ENCODE measurements at regions of chr12 and their contacts with region 1.

Region 1: DNA sequence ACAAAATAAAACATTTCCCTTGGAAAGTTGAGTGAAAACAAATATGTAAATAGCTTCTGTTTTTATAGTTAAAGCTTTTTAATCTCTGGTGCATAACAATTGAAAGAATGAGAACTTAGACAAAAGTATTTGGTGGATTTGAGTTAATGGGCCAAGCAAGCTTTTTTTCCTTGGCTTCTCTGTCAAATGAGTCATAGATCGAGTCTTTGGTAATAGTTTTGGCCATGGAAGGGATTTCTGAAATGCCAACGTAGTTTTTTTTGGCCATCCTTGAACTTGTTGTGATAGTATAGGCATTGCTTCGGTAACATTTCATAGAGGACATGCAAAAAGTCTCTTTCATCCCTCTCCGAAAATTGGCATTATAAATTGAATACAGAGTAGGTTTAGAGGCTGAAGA is 34.9 kb downstream of the GPR19 start:
- DNase-seq: no peak
- ATAC-seq: no peak
- H3K4me3 ChIP-seq: no peak overlapping the region
- H3K4me3 Mint-ChIP-seq: no peak overlapping the region
- H3K27ac ChIP-seq: no peak overlapping the region
- H3K27ac Mint-ChIP-seq: no peak overlapping the region
- H3K4me1 ChIP-seq: no peaks in the 10 kb centered on the region
- H3K4me1 Mint-ChIP-seq: peaks cover under 1% of the 10 kb centered on the region
- H3K27me3 ChIP-seq: no peaks in the 10 kb centered on the region
- H3K27me3 Mint-ChIP-seq: no peaks in the 10 kb centered on the region
- CTCF ChIP-seq: no peak

Region 2: DNA sequence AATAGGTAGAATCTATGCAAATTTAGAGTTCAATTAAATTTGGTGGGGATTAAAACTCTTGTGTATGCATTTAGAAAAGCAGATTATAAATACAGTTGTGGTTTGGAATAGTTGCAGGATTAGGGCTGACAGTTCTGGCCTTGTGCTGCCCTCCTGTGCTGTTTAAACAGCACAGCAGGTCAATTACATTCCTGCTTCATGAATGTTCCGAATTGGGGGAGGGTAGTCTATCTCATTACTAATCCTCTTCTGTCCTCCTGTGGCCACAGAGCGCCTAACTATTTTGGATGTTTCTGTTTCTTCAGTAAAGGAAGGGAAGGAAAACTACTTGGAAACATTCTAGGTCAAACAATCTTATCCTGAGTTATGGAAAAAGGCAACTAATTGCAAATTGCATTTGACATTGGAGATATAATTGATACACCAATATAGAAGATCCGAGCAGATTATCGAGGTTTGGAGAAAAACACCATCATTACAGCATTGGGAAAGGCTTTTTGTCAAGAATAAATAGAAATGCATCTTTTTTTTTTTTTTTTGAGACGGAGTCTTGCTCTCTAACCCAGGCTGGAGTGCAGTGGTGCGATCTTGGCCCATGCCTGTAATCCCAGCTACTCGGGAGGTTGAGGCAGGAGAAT is 43.6 kb after region 1 on chr12:
- CTCF ChIA-PET with region 1: interaction called, 12 read pairs
- POLR2A ChIA-PET with region 1: no interaction called
- intact Hi-C with region 1: loop called (anchors 2 to 5 kb)
- DNase-seq: peak in 5 of 9 experiments; percentile 24 to 77 (median 35)
- ATAC-seq: peak; percentile 75
- H3K4me3 ChIP-seq: no peak overlapping the region
- H3K4me3 Mint-ChIP-seq: peak overlapping the region; percentile 50
- H3K27ac ChIP-seq: no peak overlapping the region
- H3K27ac Mint-ChIP-seq: peak overlapping the region; percentile 33
- H3K4me1 ChIP-seq: peaks cover 35% of the 10 kb centered on the region
- H3K4me1 Mint-ChIP-seq: peaks cover 21% of the 10 kb centered on the region
- H3K27me3 ChIP-seq: no peaks in the 10 kb centered on the region
- H3K27me3 Mint-ChIP-seq: no peaks in the 10 kb centered on the region
- CTCF ChIP-seq: peak; percentile 60

Measured in CD8-positive, alpha-beta T cell (primary cell).